ENCODE measurements at regions of chr10 and their contacts with region 1.

Region 1: DNA sequence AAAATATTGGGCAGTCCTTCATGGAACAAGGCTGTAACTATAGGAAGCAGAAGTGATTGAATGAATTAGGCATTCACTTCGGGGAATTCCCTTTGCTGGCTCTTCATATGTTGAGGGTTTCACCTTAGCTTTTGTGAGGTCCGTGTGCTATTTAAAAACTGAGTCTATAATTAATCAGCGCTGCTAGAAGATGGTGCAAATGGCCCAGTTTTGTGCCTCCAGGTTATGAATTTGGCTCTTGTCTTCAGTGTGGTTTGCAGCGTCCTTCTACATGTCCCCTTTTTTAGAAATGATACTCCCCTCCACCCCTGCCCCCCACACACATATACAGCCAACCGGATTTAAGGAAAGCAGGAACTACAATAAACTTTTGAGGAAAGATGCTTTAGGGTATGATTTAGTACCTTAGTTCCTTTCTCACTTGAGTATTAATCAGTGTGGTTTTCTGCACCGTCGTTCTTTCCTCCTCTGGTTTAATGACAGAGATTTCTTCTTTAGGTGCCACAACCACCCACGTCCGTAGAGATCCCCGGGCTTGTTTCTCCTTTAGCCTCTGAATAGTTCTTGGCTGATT is 110.6 kb upstream of the SAMD8 start:
- DNase-seq: no peak
- ATAC-seq: peak; percentile 85
- H3K4me3 Mint-ChIP-seq: peak overlapping the region; percentile 76
- H3K27ac Mint-ChIP-seq: peak overlapping the region; percentile 93
- H3K4me1 Mint-ChIP-seq: peaks cover 32% of the 10 kb centered on the region
- H3K27me3 Mint-ChIP-seq: no peaks in the 10 kb centered on the region
- CTCF ChIP-seq: no peak

Region 2: DNA sequence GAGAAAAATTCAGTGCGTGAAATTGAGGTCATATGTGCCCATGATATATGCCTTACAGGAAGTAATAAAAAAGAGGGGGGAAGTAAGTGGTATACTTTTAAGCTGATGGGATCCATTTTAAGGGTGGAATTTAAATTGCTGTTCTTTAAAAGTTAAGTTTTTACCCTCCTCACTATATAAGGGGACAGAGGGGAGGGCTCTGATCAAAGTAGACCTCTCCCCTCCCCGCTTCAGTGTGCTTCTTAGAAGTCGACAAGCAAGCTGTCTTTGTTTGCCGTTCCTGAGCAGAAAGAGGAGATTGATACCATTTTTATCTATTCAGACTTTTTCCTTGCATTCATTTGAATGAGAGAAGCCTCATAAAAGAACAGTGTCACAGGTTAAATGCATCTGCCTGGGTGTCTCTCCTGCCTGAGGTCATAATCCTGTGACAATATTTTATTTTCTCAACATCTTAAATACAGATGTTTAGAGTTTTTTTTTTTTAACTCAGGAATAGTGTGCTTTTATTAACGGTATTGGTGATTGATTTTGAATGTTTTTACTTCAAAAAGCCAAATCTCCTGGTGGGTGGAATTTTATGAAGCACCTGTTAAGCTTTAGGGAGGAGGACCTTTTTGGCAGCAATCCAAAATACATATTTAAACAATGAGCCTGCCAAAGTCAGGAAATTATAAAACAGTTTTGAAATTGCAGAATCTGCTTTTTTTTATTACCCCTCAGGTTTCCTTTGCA is 32.8 kb before region 1 on chr10:
- CTCF ChIA-PET with region 1: no interaction called
- POLR2A ChIA-PET with region 1: no interaction called
- intact Hi-C with region 1: loop called (anchors 5 kb)
- DNase-seq: no peak
- ATAC-seq: peak; percentile 14
- H3K4me3 Mint-ChIP-seq: peak overlapping the region; percentile 65
- H3K27ac Mint-ChIP-seq: peak overlapping the region; percentile 62
- H3K4me1 Mint-ChIP-seq: peaks cover 32% of the 10 kb centered on the region
- H3K27me3 Mint-ChIP-seq: no peaks in the 10 kb centered on the region
- CTCF ChIP-seq: no peak

Region 3: DNA sequence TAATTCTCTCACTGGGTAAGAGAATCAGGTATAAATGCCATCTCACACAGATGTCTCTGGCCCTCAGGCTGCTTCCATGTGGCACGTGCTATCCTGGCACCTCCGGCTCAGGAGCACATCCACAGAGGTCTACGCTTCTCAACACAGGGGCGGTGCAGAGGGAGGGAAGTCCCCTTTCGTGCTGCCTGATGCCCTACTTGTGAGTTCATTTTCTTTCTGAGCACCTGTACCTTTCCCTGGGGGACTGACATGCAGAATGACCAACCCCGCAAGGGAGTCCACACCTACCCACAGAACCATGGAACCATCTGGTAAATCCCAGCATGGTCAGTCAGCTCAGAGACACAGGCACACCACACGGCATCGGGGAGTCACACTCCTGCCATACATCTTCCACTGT is 11.6 kb after region 1 on chr10:
- CTCF ChIA-PET with region 1: no interaction called
- POLR2A ChIA-PET with region 1: interaction called, 4 read pairs
- intact Hi-C with region 1: loop called (anchors 1 kb)
- DNase-seq: no peak
- ATAC-seq: peak; percentile 49
- H3K4me3 Mint-ChIP-seq: peak overlapping the region; percentile 33
- H3K27ac Mint-ChIP-seq: peak overlapping the region; percentile 74
- H3K4me1 Mint-ChIP-seq: peaks cover 56% of the 10 kb centered on the region
- H3K27me3 Mint-ChIP-seq: no peaks in the 10 kb centered on the region
- CTCF ChIP-seq: no peak

Region 4: DNA sequence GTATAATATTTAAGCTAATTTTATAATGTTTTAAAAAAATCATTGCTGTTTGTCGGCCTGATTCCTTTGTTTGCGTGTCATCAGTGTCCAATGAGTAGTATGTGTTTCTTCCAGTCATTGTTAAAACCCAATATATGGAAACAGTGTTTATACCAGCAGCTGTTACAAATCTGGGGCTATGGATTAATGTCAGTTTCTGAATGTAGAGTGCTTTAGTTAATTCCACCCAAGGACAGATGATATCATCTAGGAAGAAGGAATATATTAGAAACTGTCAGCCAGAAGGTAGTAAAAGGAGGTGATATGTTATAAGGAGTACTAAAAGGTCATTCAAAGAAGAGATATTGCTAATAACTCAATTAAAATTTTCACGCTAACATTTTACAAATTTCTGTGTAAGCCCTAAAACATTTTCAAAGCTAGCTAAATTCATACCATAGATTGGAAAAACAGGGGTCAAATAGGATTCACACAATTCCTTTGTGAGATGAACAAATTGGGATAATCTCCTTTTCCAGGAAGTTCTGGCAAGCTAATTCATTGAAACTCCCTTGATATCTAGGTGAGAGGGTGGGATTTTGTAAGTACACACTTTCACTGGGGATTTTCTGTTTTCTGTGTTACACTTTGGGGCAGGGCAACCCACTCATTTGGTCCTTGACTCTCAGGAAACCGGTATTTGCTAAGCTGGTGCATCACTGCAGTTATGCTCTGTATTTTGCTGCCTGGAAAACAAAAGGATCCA is 879.4 kb after region 1 on chr10:
- CTCF ChIA-PET with region 1: no interaction called
- POLR2A ChIA-PET with region 1: no interaction called
- intact Hi-C with region 1: no loop called
- DNase-seq: no peak
- ATAC-seq: no peak
- H3K4me3 Mint-ChIP-seq: no peak overlapping the region
- H3K27ac Mint-ChIP-seq: no peak overlapping the region
- H3K4me1 Mint-ChIP-seq: no peaks in the 10 kb centered on the region
- H3K27me3 Mint-ChIP-seq: no peaks in the 10 kb centered on the region
- CTCF ChIP-seq: no peak